Mammary epithelial cell (primary cell): ENCODE measurements at regions of chr7 and their contacts with region 1.

Region 1: GRCh38 chr7:130242198-130243014 is 24.3 kb upstream of the CPA2 start:
- DNase-seq: peak; percentile 93
- H3K4me3 ChIP-seq: no peak overlapping the region
- H3K27ac ChIP-seq: peak overlapping the region; percentile 76
- H3K4me1 ChIP-seq: peaks cover 13% of the 10 kb centered on the region
- H3K27me3 ChIP-seq: no peaks in the 10 kb centered on the region
- CTCF ChIP-seq: peak; percentile 78 to 89

Region 2: GRCh38 chr7:130219871-130220270 is 22.5 kb before region 1 on chr7:
- CTCF ChIA-PET with region 1: no interaction called
- dilution Hi-C with region 1: no loop called
- in situ Hi-C with region 1: no loop called
- intact Hi-C with region 1: no loop called
- DNase-seq: no peak
- H3K4me3 ChIP-seq: no peak overlapping the region
- H3K27ac ChIP-seq: no peak overlapping the region
- H3K4me1 ChIP-seq: no peaks in the 10 kb centered on the region
- H3K27me3 ChIP-seq: no peaks in the 10 kb centered on the region
- CTCF ChIP-seq: no peak

Region 3: DNA sequence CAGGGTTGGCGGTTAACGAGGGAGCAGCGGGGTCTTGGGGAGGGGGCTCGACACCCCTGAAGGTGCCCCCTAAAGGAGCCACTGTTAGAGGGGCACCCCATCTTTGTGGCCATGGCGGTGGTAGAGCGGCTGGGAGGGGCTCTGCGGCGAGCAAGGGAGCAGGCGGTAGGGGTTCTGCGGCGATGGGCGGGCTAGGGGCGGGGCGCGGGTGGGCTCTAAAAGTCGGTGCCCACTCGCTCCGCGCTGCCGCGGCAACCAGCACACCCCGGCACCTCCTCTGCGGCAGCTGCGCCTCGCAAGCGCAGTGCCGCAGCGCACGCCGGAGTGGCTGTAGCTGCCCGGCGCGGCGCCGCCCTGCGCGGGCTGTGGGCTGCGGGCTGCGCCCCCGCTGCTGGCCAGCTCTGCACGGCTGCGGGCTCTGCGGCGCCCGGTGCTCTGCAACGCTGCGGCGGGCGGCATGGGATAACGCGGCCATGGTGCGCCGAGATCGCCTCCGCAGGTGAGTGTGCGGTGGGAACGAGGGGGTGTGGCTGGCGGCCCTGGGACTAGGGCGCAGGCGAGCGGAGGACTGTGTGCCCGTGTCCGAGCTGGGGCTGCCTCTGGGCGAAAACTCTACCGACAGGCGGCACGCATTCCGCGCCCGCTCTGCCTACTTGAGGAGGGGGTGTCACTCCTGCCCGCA is 249.6 kb after region 1 on chr7 and contains the start of gene MEST:
- CTCF ChIA-PET with region 1: no interaction called
- dilution Hi-C with region 1: no loop called
- in situ Hi-C with region 1: no loop called
- intact Hi-C with region 1: loop called (anchors 2 kb)
- DNase-seq: no peak
- H3K4me3 ChIP-seq: peak within 1 kb of the TSS; percentile 25 to 58 (median 54)
- H3K27ac ChIP-seq: no peak within 1 kb of the TSS
- H3K4me1 ChIP-seq: peaks cover 5% of the 10 kb centered on the region
- H3K27me3 ChIP-seq: no peaks in the 10 kb centered on the region
- CTCF ChIP-seq: no peak
- total RNA-seq, gene MEST: 5.5 to 113 TPM

Region 4: GRCh38 chr7:130758429-130759056 is 516.1 kb after region 1 on chr7:
- CTCF ChIA-PET with region 1: interaction called, 3 read pairs
- dilution Hi-C with region 1: no loop called
- in situ Hi-C with region 1: no loop called
- intact Hi-C with region 1: loop called (anchors 1 kb)
- DNase-seq: peak; percentile 11
- H3K4me3 ChIP-seq: no peak overlapping the region
- H3K27ac ChIP-seq: no peak overlapping the region
- H3K4me1 ChIP-seq: no peaks in the 10 kb centered on the region
- H3K27me3 ChIP-seq: peaks cover 1% of the 10 kb centered on the region
- CTCF ChIP-seq: peak; percentile 57 to 65